ENCODE measurements at regions of chr19 and their contacts with region 1.

Region 1: DNA sequence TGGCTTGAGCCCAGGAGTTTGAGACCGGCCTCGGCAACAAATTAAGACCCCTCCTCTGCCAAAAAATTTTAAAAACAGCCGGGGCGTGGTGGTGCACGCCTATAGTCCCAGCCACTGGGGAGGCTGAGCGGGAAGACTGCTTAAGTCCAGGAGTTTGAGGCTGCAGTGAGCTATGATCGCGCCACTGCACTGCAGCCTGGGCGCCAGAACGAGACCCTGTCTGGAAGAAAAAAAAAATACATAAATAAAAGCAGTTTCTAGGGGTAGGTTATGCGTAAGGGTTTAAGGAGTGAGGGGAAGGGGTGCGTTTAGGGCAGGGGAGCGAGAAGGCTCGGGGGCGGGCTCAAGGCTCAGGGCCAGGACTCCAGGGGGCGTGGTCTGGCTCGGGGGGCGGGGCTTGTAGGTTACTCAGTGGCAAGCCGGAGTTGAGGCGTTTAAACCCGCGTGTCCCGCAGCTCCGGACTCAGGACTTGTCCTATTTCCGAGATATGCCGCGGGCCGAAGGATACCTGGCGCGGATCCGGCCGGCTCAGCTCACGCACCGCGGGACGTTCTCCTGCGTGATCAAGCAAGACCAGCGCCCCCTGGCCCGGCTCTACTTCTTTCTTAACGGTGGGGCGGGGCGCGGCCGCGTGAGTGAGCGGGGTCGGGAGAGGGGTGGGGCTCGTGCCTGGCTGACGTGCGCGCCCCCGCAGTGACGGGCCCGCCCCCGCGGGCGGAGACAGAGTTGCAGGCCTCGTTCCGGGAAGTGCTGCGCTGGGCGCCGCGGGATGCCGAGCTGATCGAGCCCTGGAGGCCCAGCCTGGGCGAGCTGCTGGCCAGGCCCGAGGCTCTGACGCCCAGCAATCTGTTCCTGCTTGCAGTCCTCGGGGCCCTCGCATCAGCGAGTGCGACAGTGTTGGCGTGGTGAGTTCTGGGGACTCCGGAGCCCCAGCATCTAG is 10.7 kb downstream of the SPACA6 start:
- DNase-seq: peak; percentile 98
- ATAC-seq: peak; percentile 92
- H3K4me3 Mint-ChIP-seq: peak overlapping the region; percentile 88
- H3K27ac Mint-ChIP-seq: peak overlapping the region; percentile 85
- H3K4me1 Mint-ChIP-seq: peaks cover 33% of the 10 kb centered on the region
- H3K27me3 Mint-ChIP-seq: peaks cover 16% of the 10 kb centered on the region
- CTCF ChIP-seq: no peak

Region 2: GRCh38 chr19:51726049-51726448 is 22.2 kb after region 1 on chr19:
- CTCF ChIA-PET with region 1: no interaction called
- POLR2A ChIA-PET with region 1: no interaction called
- intact Hi-C with region 1: no loop called
- DNase-seq: no peak
- ATAC-seq: no peak
- H3K4me3 Mint-ChIP-seq: no peak overlapping the region
- H3K27ac Mint-ChIP-seq: no peak overlapping the region
- H3K4me1 Mint-ChIP-seq: peaks cover 5% of the 10 kb centered on the region
- H3K27me3 Mint-ChIP-seq: peaks cover 36% of the 10 kb centered on the region
- CTCF ChIP-seq: no peak

Region 3: GRCh38 chr19:51751655-51752054 is 47.8 kb after region 1 on chr19 and contains the start of gene FPR1:
- CTCF ChIA-PET with region 1: no interaction called
- POLR2A ChIA-PET with region 1: interaction called, 10 read pairs
- intact Hi-C with region 1: no loop called
- DNase-seq: no peak
- ATAC-seq: peak; percentile 98
- H3K4me3 Mint-ChIP-seq: peak within 1 kb of the TSS; percentile 28
- H3K27ac Mint-ChIP-seq: peak within 1 kb of the TSS; percentile 57
- H3K4me1 Mint-ChIP-seq: peaks cover 12% of the 10 kb centered on the region
- H3K27me3 Mint-ChIP-seq: no peaks in the 10 kb centered on the region
- CTCF ChIP-seq: no peak
- total RNA-seq, gene FPR1: 0.49 TPM in 1 of 2 replicates, not detected in the other

Region 4: DNA sequence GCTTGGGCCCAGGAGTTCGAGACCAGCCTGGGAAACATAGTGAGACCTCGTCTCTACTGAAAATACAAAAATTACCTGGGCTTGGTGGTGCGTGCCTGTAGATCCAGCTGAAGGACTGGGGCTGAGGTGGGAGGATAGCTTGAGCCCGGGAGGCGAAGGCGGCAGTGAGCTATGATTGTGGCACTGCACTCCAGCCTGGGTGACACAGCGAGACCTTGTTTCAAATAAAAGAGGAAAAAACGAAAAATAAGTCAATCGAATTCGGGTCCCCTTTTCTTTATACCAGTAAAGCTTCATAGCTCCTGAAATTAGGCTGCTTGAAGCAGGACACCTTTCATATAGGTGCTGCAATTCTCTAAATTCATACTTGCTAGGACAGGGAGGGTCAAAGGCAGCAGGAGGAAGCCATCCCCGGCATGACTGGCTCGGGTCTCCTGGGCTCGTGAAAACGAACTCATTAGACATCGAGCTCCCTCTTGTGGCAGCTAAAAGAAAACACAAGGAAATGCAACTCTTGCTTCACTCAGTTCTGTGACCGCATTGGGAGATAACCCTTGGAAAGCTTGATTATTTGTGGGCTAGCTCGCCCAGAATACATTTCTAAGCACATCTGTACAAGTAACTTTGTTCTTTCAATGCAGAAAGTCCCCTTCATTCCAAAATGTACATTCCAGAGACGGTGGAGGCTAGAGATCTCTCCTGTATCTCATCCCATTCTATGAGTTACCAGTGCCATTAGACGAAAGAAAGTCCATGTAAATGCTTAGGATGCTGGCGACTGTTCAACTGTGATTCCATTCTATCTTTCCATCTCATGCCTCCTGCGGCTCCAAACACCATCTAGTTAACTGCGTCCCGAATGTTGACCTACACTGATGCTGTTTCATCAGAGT is 74.0 kb after region 1 on chr19:
- CTCF ChIA-PET with region 1: interaction called, 8 read pairs
- POLR2A ChIA-PET with region 1: no interaction called
- intact Hi-C with region 1: loop called (anchors 5 kb)
- DNase-seq: no peak
- ATAC-seq: peak; percentile 61
- H3K4me3 Mint-ChIP-seq: no peak overlapping the region
- H3K27ac Mint-ChIP-seq: no peak overlapping the region
- H3K4me1 Mint-ChIP-seq: peaks cover 4% of the 10 kb centered on the region
- H3K27me3 Mint-ChIP-seq: peaks cover 56% of the 10 kb centered on the region
- CTCF ChIP-seq: no peak

Region 5: DNA sequence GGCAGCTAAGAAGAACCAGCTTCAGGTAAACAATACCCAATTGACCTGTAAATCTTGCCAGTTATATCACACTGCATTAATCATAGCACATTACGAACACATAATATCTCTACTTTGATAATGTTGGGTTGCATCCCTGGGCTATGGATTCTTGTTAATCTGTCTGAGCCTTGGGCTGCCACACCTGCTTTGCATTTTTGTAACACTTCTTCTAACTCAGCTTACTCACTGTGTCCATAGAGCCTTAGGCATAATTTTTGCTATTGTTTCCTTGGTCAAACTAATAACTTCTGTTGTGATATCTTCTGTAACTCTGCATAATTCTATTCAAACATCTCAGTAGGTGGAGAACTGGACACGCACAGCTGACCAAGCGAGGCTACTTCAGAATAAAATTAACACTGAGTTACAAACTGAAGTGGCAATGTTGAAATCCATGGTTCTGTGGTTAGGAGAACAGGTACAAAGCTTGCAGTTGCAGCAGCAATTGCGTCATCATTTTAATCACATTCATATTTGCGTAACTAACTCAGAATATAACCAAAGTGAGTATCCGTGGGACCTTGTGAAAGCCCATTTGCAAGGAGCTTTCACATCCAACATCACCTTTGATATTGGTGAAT is 276.4 kb after region 1 on chr19:
- CTCF ChIA-PET with region 1: no interaction called
- POLR2A ChIA-PET with region 1: no interaction called
- intact Hi-C with region 1: no loop called
- DNase-seq: no peak
- ATAC-seq: no peak
- H3K4me3 Mint-ChIP-seq: no peak overlapping the region
- H3K27ac Mint-ChIP-seq: no peak overlapping the region
- H3K4me1 Mint-ChIP-seq: peaks cover 6% of the 10 kb centered on the region
- H3K27me3 Mint-ChIP-seq: no peaks in the 10 kb centered on the region
- CTCF ChIP-seq: no peak

Measured in activated B cell treated with CpG ODN at 0.5 μM for 24 hours (primary cell).